Activated CD8-positive, alpha-beta T cell treated with anti-CD3 and anti-CD28 coated beads, Interleukin-2, amount 10 ng/mL, durations not matched to agents 7 days and 5 days (primary cell): ENCODE measurements at regions of chr15 and their contacts with region 1.

Region 1: DNA sequence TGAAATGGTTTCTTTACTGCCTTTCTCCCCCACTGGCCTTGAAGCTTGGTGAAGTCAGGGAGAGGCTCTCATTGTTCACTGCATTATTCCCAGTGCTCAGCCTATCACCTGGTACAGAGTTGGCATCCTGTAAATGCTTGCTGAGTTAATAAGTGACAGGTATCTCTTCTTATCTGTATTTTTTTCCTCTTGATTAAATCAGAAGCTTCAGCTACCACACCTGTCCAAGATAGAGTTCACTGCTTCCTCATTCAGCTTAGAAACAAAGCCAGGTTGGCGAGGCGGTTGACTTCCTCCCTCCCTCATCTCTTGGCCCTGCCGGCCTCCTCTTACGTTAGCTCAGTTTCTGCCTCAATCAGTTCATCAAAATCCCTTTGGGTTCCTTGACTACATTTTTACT is 142.8 kb downstream of the LIPC start:
- DNase-seq: no peak
- ATAC-seq: no peak
- H3K4me3 Mint-ChIP-seq: no peak overlapping the region
- H3K27ac Mint-ChIP-seq: peak overlapping the region; percentile 32
- H3K4me1 Mint-ChIP-seq: peaks cover 4% of the 10 kb centered on the region
- H3K27me3 Mint-ChIP-seq: no peaks in the 10 kb centered on the region

Region 2: DNA sequence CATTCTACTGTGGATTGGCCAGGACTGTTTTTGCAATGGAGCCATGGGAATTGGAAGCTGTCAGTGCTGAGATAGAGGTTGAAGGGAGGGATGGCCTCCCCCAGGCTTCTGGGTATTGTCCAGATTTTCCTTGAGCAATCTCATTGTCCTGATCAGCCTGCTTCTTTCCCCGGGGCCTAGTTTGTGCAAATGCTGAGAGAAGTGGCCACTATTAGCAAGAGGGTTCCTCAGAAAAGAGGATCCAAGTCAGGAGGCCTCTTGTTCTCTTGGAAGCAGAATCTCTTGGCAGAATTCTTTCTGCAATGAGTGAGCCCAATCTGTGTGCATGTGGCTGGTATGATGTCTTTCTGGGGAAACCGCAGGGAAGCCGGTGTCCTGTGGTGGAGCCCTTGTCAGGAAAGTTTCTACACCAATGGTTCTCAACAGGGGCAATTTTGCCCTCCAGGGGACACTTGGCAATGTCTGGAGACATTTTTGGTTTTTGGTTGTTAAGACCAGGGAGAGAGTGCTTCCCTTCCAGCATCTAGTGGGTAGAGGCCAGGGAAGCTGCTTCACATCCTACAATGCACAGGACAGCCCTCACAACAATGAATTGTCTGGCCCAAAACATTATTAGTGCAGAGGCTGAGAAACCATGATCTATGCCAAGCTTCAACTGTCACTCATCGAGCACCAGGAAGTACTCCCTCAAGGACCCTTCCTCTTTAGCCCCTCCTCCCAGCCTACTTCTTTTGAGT is 140.9 kb before region 1 on chr15:
- CTCF ChIA-PET with region 1: no interaction called
- POLR2A ChIA-PET with region 1: no interaction called
- DNase-seq: no peak
- ATAC-seq: no peak
- H3K4me3 Mint-ChIP-seq: no peak overlapping the region
- H3K27ac Mint-ChIP-seq: no peak overlapping the region
- H3K4me1 Mint-ChIP-seq: peaks cover 6% of the 10 kb centered on the region
- H3K27me3 Mint-ChIP-seq: no peaks in the 10 kb centered on the region

Region 3: DNA sequence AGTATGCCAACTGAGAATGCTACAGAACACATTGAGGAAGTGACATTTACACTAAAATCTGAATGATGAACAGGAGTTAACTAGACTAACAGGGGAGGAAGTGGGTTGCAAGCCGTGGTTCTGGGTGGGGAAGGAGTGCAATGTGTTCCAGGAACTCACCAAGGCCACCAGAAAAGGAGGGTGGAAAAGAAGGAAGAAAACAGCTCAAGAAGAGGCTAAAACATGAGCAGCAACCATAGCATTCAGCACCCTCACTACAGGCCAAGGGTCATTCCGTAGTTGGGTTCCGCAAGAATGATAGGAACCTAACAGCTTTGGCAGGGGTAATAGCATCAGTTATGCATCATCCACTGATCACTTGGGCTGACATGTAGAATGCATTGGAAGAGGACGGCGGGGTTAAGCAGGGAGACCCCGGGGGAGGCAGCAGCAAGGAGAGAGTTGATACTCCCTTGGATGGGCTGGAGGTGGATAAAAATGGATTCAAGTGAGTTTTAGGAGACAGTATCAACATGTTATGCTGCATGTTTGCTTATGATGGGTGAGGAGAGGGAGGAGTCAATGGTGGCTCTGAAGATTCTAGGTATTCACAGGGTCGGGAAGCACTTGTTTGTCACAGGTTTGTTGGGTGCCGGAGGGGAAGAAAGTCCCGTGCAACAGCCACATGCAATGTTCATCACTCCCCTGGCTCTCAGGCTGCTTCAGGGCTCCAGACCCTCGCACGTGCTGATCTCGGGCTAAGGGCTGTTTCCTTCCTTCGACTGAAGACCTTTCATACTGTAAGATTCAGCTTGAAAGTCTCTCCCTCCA is 89.6 kb before region 1 on chr15:
- CTCF ChIA-PET with region 1: no interaction called
- POLR2A ChIA-PET with region 1: no interaction called
- DNase-seq: peak; percentile 85
- ATAC-seq: peak; percentile 81
- H3K4me3 Mint-ChIP-seq: peak overlapping the region; percentile 60
- H3K27ac Mint-ChIP-seq: peak overlapping the region; percentile 95
- H3K4me1 Mint-ChIP-seq: peaks cover 53% of the 10 kb centered on the region
- H3K27me3 Mint-ChIP-seq: no peaks in the 10 kb centered on the region

Region 4: GRCh38 chr15:58585693-58586443 is 11.2 kb after region 1 on chr15:
- CTCF ChIA-PET with region 1: interaction called, 12 read pairs
- POLR2A ChIA-PET with region 1: interaction called, 4 read pairs
- DNase-seq: no peak
- ATAC-seq: no peak
- H3K4me3 Mint-ChIP-seq: no peak overlapping the region
- H3K27ac Mint-ChIP-seq: peak overlapping the region; percentile 53
- H3K4me1 Mint-ChIP-seq: peaks cover 15% of the 10 kb centered on the region
- H3K27me3 Mint-ChIP-seq: peaks cover 4% of the 10 kb centered on the region

Region 5: GRCh38 chr15:58616171-58616570 is 41.5 kb after region 1 on chr15:
- CTCF ChIA-PET with region 1: no interaction called
- POLR2A ChIA-PET with region 1: no interaction called
- DNase-seq: no peak
- ATAC-seq: no peak
- H3K4me3 Mint-ChIP-seq: no peak overlapping the region
- H3K27ac Mint-ChIP-seq: no peak overlapping the region
- H3K4me1 Mint-ChIP-seq: peaks cover 3% of the 10 kb centered on the region
- H3K27me3 Mint-ChIP-seq: no peaks in the 10 kb centered on the region

Region 6: DNA sequence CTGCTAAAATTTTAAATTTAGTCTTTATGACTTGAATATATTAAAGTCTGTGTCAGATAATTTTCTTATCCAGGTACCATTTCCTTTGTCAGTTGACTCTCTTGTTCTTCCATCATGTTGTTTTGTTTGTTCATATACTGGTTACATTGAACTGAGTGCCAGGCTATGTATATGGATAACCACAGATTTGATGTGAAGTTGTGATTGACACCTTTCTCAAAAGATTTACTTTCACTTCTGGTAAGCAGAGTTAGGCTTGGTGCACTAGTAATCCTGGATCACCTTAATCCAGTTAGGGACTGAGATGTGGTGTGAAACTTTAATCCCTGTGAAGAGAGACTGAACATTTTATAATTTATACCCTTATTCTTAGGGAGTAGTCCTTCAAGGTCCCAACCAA is 75.5 kb after region 1 on chr15:
- CTCF ChIA-PET with region 1: no interaction called
- POLR2A ChIA-PET with region 1: no interaction called
- DNase-seq: no peak
- ATAC-seq: peak; percentile 49
- H3K4me3 Mint-ChIP-seq: no peak overlapping the region
- H3K27ac Mint-ChIP-seq: no peak overlapping the region
- H3K4me1 Mint-ChIP-seq: peaks cover 11% of the 10 kb centered on the region
- H3K27me3 Mint-ChIP-seq: no peaks in the 10 kb centered on the region